Endothelial cell of umbilical vein (primary cell): ENCODE measurements at regions of chr5 and their contacts with region 1.

Region 1: DNA sequence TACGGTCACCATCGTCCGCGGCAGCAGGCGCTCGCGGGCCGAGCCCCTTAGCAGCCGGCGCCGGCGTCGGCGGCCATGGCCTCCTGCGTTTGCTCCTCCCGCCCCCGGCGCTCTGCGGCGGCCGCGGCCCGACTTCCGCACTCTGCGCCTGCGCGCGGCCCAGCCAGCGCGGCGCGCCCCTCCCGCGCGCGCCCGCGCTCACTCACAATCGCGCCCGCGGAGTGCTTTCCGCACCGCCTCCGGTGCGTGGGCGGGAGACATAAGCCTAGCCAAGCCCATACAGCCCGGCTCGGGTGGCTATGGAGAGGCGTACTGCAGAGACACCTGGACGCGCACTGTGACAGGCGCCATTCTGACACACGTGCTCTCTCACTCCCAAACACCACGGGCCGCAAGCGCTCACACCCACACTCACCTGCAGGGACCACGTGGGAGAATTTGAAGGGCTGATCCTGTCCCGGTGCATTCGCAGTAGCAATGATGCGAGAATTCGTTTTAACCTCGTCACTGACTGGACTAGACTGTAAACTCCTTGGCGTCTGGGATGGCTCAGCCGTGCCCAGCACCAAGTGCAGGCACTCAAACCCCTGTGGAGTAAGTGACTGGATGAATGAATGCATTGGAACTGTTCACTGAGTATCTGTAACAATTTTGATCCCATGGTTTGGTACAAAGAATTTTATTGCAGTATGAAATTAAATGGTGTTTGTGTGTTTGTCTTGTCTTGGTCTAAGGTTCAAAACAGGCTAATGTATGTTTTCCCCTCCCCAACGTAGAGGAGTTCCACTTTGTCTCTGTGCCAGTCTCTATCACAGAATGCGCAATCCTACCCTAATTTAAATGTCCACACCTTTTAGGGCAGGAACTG is at the start of gene RNF145:
- DNase-seq: peak; percentile 80
- H3K4me3 ChIP-seq: peak within 1 kb of the TSS; percentile 88 to 97 (median 95)
- H3K27ac ChIP-seq: peak within 1 kb of the TSS; percentile 73
- H3K4me1 ChIP-seq: peaks cover 26% of the 10 kb centered on the region
- H3K27me3 ChIP-seq: no peaks in the 10 kb centered on the region
- CTCF ChIP-seq: no peak
- POLR2A ChIP-seq: peak; percentile 71
- total RNA-seq, gene RNF145: 59.7 and 62.3 TPM in 2 replicates

Region 2: DNA sequence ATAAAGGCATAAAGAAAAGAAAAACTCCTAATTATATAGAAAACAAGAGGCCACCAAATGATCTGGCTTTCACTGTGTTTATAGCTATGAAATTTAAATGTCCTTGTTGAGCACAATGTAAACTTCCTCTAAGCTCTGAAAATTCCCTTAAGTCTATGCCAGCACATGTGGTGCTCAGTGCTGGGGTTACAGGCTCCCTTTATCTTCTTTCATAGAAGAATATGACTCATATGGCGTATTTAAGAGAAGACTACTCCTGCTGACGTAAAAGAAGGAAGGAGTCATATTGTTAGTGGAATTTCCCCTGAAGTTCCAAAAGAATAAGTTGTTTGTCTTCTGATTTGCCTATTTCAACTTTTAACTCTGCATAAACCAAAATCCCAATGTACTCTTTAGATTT is 30.7 kb before region 1 on chr5:
- CTCF ChIA-PET with region 1: interaction called, 8 read pairs
- POLR2A ChIA-PET with region 1: interaction called, 4 read pairs
- dilution Hi-C with region 1: no loop called
- intact Hi-C with region 1: loop called (anchors 1 kb)
- DNase-seq: peak; percentile 97
- H3K4me3 ChIP-seq: peak overlapping the region in 1 of 3 experiments; percentile 29
- H3K27ac ChIP-seq: peak overlapping the region; percentile 90
- H3K4me1 ChIP-seq: peaks cover 30% of the 10 kb centered on the region
- H3K27me3 ChIP-seq: no peaks in the 10 kb centered on the region
- CTCF ChIP-seq: no peak
- POLR2A ChIP-seq: peak; percentile 34

Region 3: GRCh38 chr5:159262859-159263567 is 53.3 kb after region 1 on chr5 and contains the start of gene UBLCP1:
- CTCF ChIA-PET with region 1: no interaction called
- POLR2A ChIA-PET with region 1: no interaction called
- dilution Hi-C with region 1: no loop called
- intact Hi-C with region 1: loop called (anchors 1 kb)
- DNase-seq: peak; percentile 67
- H3K4me3 ChIP-seq: peak within 1 kb of the TSS; percentile 13 to 84 (median 63)
- H3K27ac ChIP-seq: peak within 1 kb of the TSS; percentile 34
- H3K4me1 ChIP-seq: peaks cover 11% of the 10 kb centered on the region
- H3K27me3 ChIP-seq: peaks cover 0 to 2% of the 10 kb centered on the region in 2 experiments
- CTCF ChIP-seq: no peak
- POLR2A ChIP-seq: peak; percentile 77
- total RNA-seq, gene UBLCP1: 18.2 and 20.3 TPM in 2 replicates

Region 4: DNA sequence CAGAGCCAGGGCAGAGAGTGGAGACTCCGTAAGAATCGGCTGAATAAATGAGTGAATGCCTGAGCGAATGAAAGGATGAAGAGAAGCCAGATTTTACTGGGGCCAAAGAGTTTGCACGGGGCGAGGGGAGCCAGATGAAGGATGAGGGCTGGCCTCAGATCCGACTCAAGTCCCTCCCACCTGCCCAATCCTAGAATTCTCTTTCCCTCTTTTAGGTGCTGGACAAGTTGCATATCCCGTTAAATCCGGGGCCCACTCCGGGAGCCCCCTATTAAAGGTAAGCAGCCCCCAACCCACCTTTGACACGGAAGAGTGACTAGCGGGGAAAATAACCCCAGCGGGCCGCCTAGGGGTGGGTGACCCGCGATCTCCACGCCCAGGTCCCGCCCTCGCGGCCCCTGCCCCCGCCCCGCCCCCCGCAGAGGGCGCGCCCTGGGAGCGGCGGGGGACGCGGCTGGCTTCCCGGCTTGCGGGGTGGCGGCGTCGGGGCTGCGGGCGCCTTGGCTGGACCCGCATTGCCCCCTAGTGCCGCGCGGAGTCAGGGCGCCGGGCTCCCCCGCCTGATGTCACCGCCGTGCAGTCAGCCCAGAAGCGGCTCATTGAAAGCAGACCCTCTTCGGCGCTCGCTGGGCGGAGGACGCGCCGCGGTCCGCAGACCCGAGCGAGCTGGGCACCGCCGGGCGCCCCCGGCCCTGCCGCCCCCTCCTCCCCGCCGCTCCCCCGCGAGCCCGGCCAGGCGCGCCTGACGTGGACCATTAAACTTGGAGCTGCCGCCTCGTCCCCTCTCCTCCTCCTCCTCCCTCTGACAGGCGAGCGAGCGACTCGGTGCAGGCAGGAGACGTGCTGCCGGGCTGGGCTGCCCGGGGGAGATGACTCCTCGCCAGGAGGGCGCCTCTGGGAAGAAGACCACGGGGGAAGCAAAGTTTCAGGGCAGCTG is 706.5 kb after region 1 on chr5 and contains the start of gene ADRA1B:
- CTCF ChIA-PET with region 1: no interaction called
- POLR2A ChIA-PET with region 1: no interaction called
- dilution Hi-C with region 1: no loop called
- intact Hi-C with region 1: loop called (anchors 1 kb)
- DNase-seq: peak; percentile 42
- H3K4me3 ChIP-seq: peak within 1 kb of the TSS in 2 of 3 experiments; percentile 28 to 48
- H3K27ac ChIP-seq: no peak within 1 kb of the TSS
- H3K4me1 ChIP-seq: peaks cover 27% of the 10 kb centered on the region
- H3K27me3 ChIP-seq: peaks cover 4 to 10% of the 10 kb centered on the region in 2 experiments
- CTCF ChIP-seq: peak; percentile 19 to 55
- POLR2A ChIP-seq: no peak
- total RNA-seq, gene ADRA1B: 0.21 TPM in 1 of 2 replicates, not detected in the other

Region 5: GRCh38 chr5:160399402-160400353 is 1190.0 kb after region 1 on chr5 and contains the start of gene FAM200C:
- CTCF ChIA-PET with region 1: no interaction called
- POLR2A ChIA-PET with region 1: no interaction called
- dilution Hi-C with region 1: no loop called
- intact Hi-C with region 1: loop called (anchors 10 kb)
- DNase-seq: peak; percentile 95
- H3K4me3 ChIP-seq: peak within 1 kb of the TSS; percentile 57 to 84 (median 72)
- H3K27ac ChIP-seq: peak within 1 kb of the TSS; percentile 77
- H3K4me1 ChIP-seq: peaks cover 9% of the 10 kb centered on the region
- H3K27me3 ChIP-seq: no peaks in the 10 kb centered on the region
- CTCF ChIP-seq: no peak
- POLR2A ChIP-seq: peak; percentile 96
- total RNA-seq, gene FAM200C: 2.6 and 2.7 TPM in 2 replicates